ENCODE measurements at regions of chr13 and their contacts with region 1.

Region 1: DNA sequence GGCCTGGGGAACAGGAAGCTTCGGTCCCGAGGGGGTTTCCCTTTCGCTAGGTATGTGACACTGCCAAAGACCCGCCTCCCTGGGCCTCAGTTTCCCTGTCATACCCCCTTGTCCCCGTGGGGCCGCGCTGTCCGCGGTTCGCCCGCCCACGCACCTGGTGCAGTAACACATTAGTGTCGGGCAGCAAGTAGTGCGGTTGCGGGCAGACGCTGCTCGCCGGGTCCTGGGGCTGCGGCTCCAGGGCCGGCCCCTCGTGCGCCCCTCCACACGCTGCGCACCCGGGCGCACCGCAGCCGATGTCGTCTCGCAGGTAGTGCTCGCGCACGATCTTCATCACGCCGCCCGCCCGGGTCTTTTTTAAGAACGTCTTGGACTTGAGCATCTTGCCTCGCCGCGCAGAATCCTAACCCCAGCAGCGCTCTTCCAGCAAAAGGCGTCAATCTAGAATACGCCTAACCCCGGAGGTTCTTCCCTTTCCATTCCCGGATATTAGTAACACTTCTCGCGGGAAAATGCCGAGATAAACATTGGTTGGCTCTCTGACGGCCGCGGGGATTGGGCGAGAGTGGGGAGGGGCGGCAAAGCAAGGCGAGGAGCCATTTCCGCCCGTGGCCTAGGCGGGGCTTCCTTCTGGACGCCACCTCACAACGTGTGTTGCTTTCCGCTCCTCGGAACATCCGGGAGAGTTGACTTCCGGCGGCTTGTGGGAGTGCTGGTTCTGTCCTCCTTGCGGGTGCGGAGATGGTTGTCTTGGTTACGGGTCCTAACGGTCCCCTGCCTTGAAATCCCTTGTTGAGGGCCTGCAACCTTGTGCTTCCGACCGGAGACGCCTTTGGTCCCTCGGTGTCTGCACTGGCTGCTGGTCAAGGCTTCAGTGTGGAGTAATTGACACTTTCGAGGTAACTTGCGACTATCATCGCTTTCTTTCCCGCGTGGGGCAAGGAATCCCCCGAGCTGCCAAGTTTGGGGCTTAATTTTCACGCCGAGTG is at the starts of genes DIS3 and PIBF1:
- DNase-seq: peak; percentile 97 to 98 (median 98)
- ATAC-seq: peak; percentile 100
- H3K4me3 ChIP-seq: peak within 1 kb of the TSS; percentile 71 to 99 (median 85)
- H3K27ac ChIP-seq: peak within 1 kb of the TSS; percentile 39 to 94 (median 86)
- H3K4me1 ChIP-seq: peaks cover 6 to 59% (median 32%) of the 10 kb centered on the region in 12 donors
- H3K27me3 ChIP-seq: no peaks in the 10 kb centered on the region
- CTCF ChIP-seq: no peak
- POLR2A ChIP-seq: peak; percentile 49 to 85
- total RNA-seq, gene DIS3: 13.9 to 22.2 (median 17.7) TPM
- total RNA-seq, gene PIBF1: 7.6 to 24.1 (median 12.8) TPM

Region 2: GRCh38 chr13:72727417-72728289 is 54.1 kb before region 1 on chr13 and contains the starts of genes BORA and MZT1:
- intact Hi-C with region 1: loop called in 4 of 10 experiments (anchors 5 kb)
- DNase-seq: peak; percentile 94 to 97 (median 96)
- ATAC-seq: peak; percentile 98 to 99 (median 99)
- H3K4me3 ChIP-seq: peak within 1 kb of the TSS; percentile 70 to 97 (median 88)
- H3K27ac ChIP-seq: peak within 1 kb of the TSS in 10 of 12 donors; percentile 10 to 76 (median 57)
- H3K4me1 ChIP-seq: peaks cover 0 to 28% (median 14%) of the 10 kb centered on the region in 12 donors
- H3K27me3 ChIP-seq: no peaks in the 10 kb centered on the region
- CTCF ChIP-seq: no peak
- POLR2A ChIP-seq: peak in 1 of 2 donors; percentile 48
- total RNA-seq, gene BORA: 0.35 to 4.0 (median 0.72) TPM
- total RNA-seq, gene MZT1: 4.4 to 8.6 (median 6.9) TPM